CD4-positive, alpha-beta memory T cell (primary cell): ENCODE measurements at regions of chr16 and their contacts with region 1.

Region 1: GRCh38 chr16:67150833-67151396 is at the start of gene B3GNT9:
- DNase-seq: peak in 2 of 5 donors; percentile 47 to 59
- H3K4me3 ChIP-seq: peak within 1 kb of the TSS; percentile 29 to 69
- H3K4me3 Mint-ChIP-seq: peak within 1 kb of the TSS; percentile 78 to 86 (median 84)
- H3K27ac ChIP-seq: peak within 1 kb of the TSS; percentile 52
- H3K27ac Mint-ChIP-seq: peak within 1 kb of the TSS; percentile 64 to 85 (median 81)
- H3K4me1 ChIP-seq: peaks cover 33% of the 10 kb centered on the region
- H3K4me1 Mint-ChIP-seq: peaks cover 22 to 53% (median 33%) of the 10 kb centered on the region in 4 donors
- H3K27me3 ChIP-seq: no peaks in the 10 kb centered on the region
- H3K27me3 Mint-ChIP-seq: no peaks in the 10 kb centered on the region
- total RNA-seq, gene B3GNT9: 10.0 to 10.4 TPM

Region 2: GRCh38 chr16:66832661-66833305 is 318.1 kb before region 1 on chr16:
- CTCF ChIA-PET with region 1: no interaction called
- POLR2A ChIA-PET with region 1: no interaction called
- intact Hi-C with region 1: no loop called
- DNase-seq: no peak
- H3K4me3 ChIP-seq: no peak overlapping the region
- H3K4me3 Mint-ChIP-seq: peak overlapping the region in 1 of 8 donors; percentile 43
- H3K27ac ChIP-seq: no peak overlapping the region
- H3K27ac Mint-ChIP-seq: peak overlapping the region in 2 of 7 donors; percentile 46 to 57
- H3K4me1 ChIP-seq: peaks cover 30% of the 10 kb centered on the region
- H3K4me1 Mint-ChIP-seq: peaks cover 10 to 21% (median 15%) of the 10 kb centered on the region in 4 donors
- H3K27me3 ChIP-seq: no peaks in the 10 kb centered on the region
- H3K27me3 Mint-ChIP-seq: peaks cover 2% of the 10 kb centered on the region in 2 donors

Region 3: GRCh38 chr16:66984892-66985311 is 166.0 kb before region 1 on chr16:
- CTCF ChIA-PET with region 1: interaction called, 50 read pairs
- POLR2A ChIA-PET with region 1: interaction called, 11 read pairs
- intact Hi-C with region 1: no loop called
- DNase-seq: peak in 1 of 5 donors; percentile 2
- H3K4me3 ChIP-seq: no peak overlapping the region
- H3K4me3 Mint-ChIP-seq: peak overlapping the region in 5 of 8 donors; percentile 31 to 69 (median 43)
- H3K27ac ChIP-seq: peak overlapping the region; percentile 41
- H3K27ac Mint-ChIP-seq: peak overlapping the region; percentile 83 to 96 (median 93)
- H3K4me1 ChIP-seq: peaks cover 35% of the 10 kb centered on the region
- H3K4me1 Mint-ChIP-seq: peaks cover 23 to 38% (median 30%) of the 10 kb centered on the region in 4 donors
- H3K27me3 ChIP-seq: no peaks in the 10 kb centered on the region
- H3K27me3 Mint-ChIP-seq: no peaks in the 10 kb centered on the region

Region 4: DNA sequence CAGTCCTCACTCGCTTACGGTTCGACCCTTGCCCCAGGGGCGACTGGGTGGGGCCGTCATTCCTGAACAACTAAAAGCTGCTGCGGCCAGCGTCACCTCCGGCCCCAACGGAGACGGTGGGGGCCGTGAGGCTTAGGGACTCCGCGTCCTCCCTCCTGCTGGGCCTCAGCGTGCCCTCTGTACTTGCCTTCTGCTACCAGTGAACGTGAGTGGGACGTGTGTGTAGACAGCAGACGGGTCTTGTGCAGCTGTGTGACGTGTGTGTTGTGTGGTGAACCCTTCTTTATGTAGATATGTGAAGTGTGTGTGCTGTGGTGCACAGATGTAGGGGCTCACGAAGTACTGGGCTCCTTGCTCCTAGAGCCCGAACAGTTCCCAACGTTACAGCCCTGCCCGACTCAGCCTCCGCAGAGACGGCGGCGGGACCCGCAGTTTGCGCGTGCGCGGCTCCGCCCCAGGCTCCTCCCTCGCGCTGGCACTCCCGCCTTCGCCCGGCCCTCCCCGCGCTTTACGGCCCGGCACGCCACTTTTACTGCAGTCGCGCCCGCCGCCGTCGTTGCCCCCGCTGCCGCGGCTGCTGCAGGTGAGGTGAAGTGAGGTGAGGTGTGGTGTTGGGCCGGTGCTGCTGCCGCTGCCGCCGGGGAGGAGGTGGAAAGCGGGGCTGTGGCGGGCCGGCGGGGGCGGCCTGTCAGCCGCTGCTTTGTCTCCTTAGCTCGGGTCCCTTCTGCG is 41.3 kb before region 1 on chr16 and contains the start of gene PHAF1:
- CTCF ChIA-PET with region 1: interaction called, 41 read pairs
- POLR2A ChIA-PET with region 1: interaction called, 6 read pairs
- intact Hi-C with region 1: loop called (anchors 2 kb)
- DNase-seq: peak; percentile 93 to 98 (median 96)
- H3K4me3 ChIP-seq: peak within 1 kb of the TSS; percentile 85 to 96
- H3K4me3 Mint-ChIP-seq: peak within 1 kb of the TSS; percentile 92 to 97 (median 94)
- H3K27ac ChIP-seq: peak within 1 kb of the TSS; percentile 66
- H3K27ac Mint-ChIP-seq: peak within 1 kb of the TSS; percentile 84 to 95 (median 91)
- H3K4me1 ChIP-seq: peaks cover 30% of the 10 kb centered on the region
- H3K4me1 Mint-ChIP-seq: peaks cover 21 to 41% (median 30%) of the 10 kb centered on the region in 4 donors
- H3K27me3 ChIP-seq: no peaks in the 10 kb centered on the region
- H3K27me3 Mint-ChIP-seq: no peaks in the 10 kb centered on the region
- total RNA-seq, gene PHAF1: 22.2 to 22.7 TPM

Region 5: GRCh38 chr16:67173808-67174705 is 23.1 kb after region 1 on chr16:
- CTCF ChIA-PET with region 1: interaction called, 43 read pairs
- POLR2A ChIA-PET with region 1: interaction called, 29 read pairs
- intact Hi-C with region 1: no loop called
- DNase-seq: peak; percentile 61 to 78 (median 64)
- H3K4me3 ChIP-seq: peak overlapping the region; percentile 29 to 68
- H3K4me3 Mint-ChIP-seq: peak overlapping the region; percentile 81 to 95 (median 88)
- H3K27ac ChIP-seq: peak overlapping the region; percentile 20
- H3K27ac Mint-ChIP-seq: peak overlapping the region; percentile 61 to 96 (median 78)
- H3K4me1 ChIP-seq: peaks cover 49% of the 10 kb centered on the region
- H3K4me1 Mint-ChIP-seq: peaks cover 26 to 66% (median 37%) of the 10 kb centered on the region in 4 donors
- H3K27me3 ChIP-seq: peaks cover 14% of the 10 kb centered on the region
- H3K27me3 Mint-ChIP-seq: peaks cover 5 to 18% of the 10 kb centered on the region in 2 donors